Left ventricle myocardium superior (tissue), 1 donor: ENCODE measurements at regions of chr15 and their contacts with region 1.

Region 1: DNA sequence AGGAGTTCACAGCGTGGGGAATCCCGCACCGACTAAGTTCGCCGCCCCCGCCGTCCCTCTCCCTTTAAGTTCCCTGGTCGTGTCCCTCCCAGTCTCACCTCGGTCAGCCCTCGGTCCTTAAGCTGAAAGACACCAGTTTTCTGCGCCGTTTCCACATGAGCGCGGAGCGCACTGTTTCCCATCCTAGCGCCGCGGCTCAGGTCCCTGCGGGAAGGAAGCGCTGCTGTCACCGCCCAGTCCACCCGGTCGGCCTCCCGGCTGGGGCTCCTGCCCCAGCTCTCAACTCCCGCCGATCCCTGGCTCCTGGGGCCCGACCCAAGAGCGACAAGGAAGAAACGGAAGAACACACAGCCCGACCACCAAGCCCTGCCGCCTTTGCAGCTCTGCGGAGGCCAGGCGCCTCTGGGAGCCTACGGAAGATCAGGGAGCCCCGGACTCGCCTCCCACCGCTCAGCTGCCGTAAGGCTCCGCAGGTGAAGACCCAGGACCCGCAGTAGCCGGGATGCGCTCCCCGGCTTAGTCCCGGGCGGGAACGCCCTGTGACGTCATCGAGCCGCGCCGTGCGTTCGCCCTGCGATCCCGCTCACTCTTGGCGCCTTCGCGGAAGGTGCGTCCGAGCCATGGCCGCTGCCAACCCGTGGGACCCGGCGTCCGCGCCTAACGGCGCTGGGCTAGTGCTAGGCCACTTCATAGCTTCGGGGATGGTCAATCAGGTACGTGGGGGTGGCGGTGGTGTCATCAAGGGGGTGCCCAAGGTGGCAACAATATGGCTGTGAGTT is at the starts of genes HAUS2 and LRRC57:
- DNase-seq: peak; percentile 94
- ATAC-seq: peak; percentile 97
- total RNA-seq, gene HAUS2: 12.2 TPM
- total RNA-seq, gene LRRC57: 14.0 TPM

Region 2: DNA sequence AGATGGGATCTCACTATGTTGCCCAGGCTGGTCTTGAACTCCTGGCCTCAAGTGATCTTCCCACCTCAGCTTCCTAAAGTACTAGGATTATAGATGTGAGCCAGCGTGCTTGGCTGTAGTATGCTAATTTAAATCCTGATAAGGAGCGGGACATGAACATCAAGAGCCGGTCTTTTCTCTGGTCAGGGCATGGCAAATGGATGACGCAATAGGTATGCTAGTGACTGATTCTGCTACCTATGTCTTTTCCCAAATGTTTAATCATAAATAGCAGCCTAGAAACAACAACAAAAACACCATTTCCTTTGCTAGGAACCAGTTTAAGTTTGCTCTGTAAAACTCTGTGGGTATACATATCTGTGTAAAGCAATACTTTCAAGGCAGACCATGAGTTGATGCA is 91.7 kb after region 1 on chr15:
- intact Hi-C with region 1: loop called (anchors 10 kb)
- DNase-seq: no peak
- ATAC-seq: no peak